ENCODE measurements at regions of chr3 and their contacts with region 1.

Region 1: DNA sequence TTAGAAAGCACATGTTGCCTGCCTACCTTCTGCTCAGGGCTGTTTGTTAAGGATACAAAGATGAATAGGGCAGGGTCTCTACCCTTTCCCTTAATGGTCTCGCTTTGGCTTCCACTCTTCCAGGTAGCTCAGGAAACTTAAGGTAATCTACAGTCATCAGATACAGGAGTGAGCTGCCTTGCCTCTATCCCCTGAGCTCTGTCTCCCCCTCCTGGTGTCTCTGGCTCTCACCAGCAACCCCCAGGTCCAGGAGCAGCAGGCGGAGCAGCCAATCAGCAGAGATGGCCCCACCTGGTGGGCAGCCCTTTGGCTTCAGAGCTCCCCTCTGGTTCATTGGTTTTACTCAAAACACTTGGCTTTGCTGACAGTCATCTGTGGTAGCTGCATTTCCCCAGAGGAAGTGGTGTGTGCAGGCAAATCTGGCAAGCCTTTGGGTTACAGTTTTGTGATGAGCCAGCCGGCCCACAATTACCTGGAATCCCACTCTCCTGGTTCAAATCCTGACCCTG is 8.5 kb upstream of the CX3CR1 start:
- DNase-seq: no peak
- H3K4me3 ChIP-seq: no peak overlapping the region
- CTCF ChIP-seq: peak; percentile 93

Region 2: GRCh38 chr3:39086144-39086543 is 202.2 kb before region 1 on chr3:
- CTCF ChIA-PET with region 1: interaction called, 20 read pairs
- POLR2A ChIA-PET with region 1: no interaction called
- DNase-seq: no peak
- H3K4me3 ChIP-seq: no peak overlapping the region
- CTCF ChIP-seq: no peak

Region 3: GRCh38 chr3:39118079-39118478 is 170.3 kb before region 1 on chr3:
- CTCF ChIA-PET with region 1: interaction called, 545 read pairs
- POLR2A ChIA-PET with region 1: no interaction called
- DNase-seq: no peak
- H3K4me3 ChIP-seq: no peak overlapping the region
- CTCF ChIP-seq: no peak

Region 4: GRCh38 chr3:39166134-39166731 is 122.1 kb before region 1 on chr3:
- CTCF ChIA-PET with region 1: interaction called, 26 read pairs
- POLR2A ChIA-PET with region 1: no interaction called
- DNase-seq: peak; percentile 89
- H3K4me3 ChIP-seq: no peak overlapping the region
- CTCF ChIP-seq: peak; percentile 0

Region 5: DNA sequence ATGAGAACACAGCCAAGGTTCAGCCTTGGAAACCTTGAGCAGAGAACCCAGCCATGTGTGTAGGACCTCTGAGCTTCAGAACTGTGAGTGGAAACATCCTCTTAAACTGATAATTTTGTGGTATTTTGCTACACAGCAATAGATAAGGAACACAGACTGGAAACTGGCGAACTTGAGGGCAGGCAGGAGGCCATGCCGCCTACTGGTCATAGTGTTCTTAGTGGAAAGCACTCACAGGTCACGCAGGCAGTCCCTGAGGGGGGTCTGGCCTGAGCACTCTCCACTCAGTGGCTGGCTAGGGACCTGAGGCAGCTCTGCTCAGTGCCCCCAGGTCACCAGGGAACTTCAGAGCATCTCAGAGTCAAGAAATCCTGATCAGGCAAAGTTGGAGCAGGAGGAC is 86.3 kb before region 1 on chr3:
- CTCF ChIA-PET with region 1: interaction called, 574 read pairs
- POLR2A ChIA-PET with region 1: no interaction called
- DNase-seq: no peak
- H3K4me3 ChIP-seq: no peak overlapping the region
- CTCF ChIP-seq: no peak

Region 6: DNA sequence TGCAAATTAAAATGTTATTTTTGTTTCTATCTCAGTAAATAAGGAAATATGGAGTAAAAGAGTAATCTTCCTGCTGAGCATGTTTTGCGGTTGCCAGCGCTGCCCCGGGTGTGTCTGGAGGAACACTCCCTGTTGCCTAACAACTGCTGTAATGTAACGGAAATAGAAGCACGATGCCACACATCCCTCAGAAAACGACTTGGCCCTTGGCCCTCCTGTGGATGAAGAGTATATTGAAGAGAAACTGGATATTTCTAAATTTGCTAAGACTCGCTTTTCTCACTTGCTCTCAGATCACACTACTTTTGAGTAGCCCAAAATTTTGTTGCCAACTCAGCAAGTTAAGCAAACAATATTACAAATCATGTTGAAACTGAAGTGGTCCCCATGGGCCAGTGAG is 27.4 kb before region 1 on chr3:
- CTCF ChIA-PET with region 1: interaction called, 19 read pairs
- POLR2A ChIA-PET with region 1: no interaction called
- DNase-seq: peak; percentile 67
- H3K4me3 ChIP-seq: no peak overlapping the region
- CTCF ChIP-seq: no peak

Measured in AG04449 (cell line).